ENCODE measurements at regions of chr17 and their contacts with region 1.

Region 1: GRCh38 chr17:66397486-66397885 is 95.1 kb downstream of the PRKCA start:
- DNase-seq: peak; percentile 62
- H3K4me3 Mint-ChIP-seq: peak overlapping the region; percentile 35
- H3K27ac Mint-ChIP-seq: peak overlapping the region; percentile 86
- H3K4me1 Mint-ChIP-seq: peaks cover 67% of the 10 kb centered on the region
- H3K27me3 Mint-ChIP-seq: no peaks in the 10 kb centered on the region

Region 2: GRCh38 chr17:66373944-66374817 is 23.3 kb before region 1 on chr17:
- intact Hi-C with region 1: loop called (anchors 1 kb)
- DNase-seq: peak; percentile 76
- H3K4me3 Mint-ChIP-seq: peak overlapping the region; percentile 64
- H3K27ac Mint-ChIP-seq: peak overlapping the region; percentile 86
- H3K4me1 Mint-ChIP-seq: peaks cover 59% of the 10 kb centered on the region
- H3K27me3 Mint-ChIP-seq: no peaks in the 10 kb centered on the region

Region 3: GRCh38 chr17:66383333-66383732 is 14.2 kb before region 1 on chr17:
- intact Hi-C with region 1: loop called (anchors 2 kb)
- DNase-seq: no peak
- H3K4me3 Mint-ChIP-seq: no peak overlapping the region
- H3K27ac Mint-ChIP-seq: peak overlapping the region; percentile 66
- H3K4me1 Mint-ChIP-seq: peaks cover 53% of the 10 kb centered on the region
- H3K27me3 Mint-ChIP-seq: no peaks in the 10 kb centered on the region

Region 4: DNA sequence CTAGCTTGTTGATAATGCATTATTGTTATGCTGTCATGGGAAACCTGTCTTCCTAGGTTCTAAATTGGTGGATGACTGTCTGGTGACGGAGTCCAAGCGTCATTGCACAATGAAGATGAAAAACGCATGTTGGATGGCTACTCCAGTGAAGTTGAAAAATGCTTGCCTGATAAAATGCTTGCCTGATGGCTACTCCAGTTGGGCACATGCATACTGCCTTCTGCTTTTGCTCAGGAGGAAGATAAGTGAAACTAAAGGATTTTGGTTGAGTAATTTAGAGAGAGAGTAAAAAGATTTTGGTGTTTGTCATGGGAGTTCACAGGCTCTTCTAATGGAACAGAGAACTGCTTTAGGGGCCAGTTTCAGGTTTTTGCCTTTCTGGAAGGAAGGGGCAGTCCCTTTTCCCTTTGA is 23.5 kb after region 1 on chr17:
- intact Hi-C with region 1: loop called (anchors 1 kb)
- DNase-seq: no peak
- H3K4me3 Mint-ChIP-seq: no peak overlapping the region
- H3K27ac Mint-ChIP-seq: peak overlapping the region; percentile 14
- H3K4me1 Mint-ChIP-seq: peaks cover 61% of the 10 kb centered on the region
- H3K27me3 Mint-ChIP-seq: no peaks in the 10 kb centered on the region

Region 5: GRCh38 chr17:66514227-66514806 is 116.8 kb after region 1 on chr17:
- intact Hi-C with region 1: loop called (anchors 5 kb)
- DNase-seq: no peak
- H3K4me3 Mint-ChIP-seq: no peak overlapping the region
- H3K27ac Mint-ChIP-seq: peak overlapping the region; percentile 42
- H3K4me1 Mint-ChIP-seq: peaks cover 68% of the 10 kb centered on the region
- H3K27me3 Mint-ChIP-seq: no peaks in the 10 kb centered on the region

Region 6: DNA sequence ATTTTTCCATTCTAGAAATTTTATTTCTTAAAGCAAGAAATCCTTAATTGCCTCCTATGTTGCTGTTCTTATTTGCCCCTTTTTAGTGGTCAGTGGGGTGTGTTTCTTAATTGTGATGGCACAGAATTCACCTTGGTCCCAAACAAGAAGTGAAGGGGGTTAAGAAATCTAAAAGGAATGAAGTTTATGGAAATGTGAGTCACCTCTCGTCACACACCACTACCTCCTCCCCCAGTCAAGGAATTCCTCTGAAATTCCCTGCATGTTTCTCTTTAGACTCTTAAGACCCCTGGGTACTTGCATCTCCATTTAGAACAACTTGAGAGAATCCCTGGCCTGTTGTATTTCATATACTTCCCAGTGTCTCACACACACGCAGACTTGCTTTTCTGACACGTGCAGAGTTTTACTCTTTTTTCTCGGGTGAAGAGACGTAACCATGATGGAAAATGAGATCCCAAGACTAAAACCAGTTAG is 152.3 kb after region 1 on chr17:
- intact Hi-C with region 1: loop called (anchors 1 kb)
- DNase-seq: no peak
- H3K4me3 Mint-ChIP-seq: no peak overlapping the region
- H3K27ac Mint-ChIP-seq: no peak overlapping the region
- H3K4me1 Mint-ChIP-seq: peaks cover 45% of the 10 kb centered on the region
- H3K27me3 Mint-ChIP-seq: no peaks in the 10 kb centered on the region